Activated CD4-positive, alpha-beta T cell treated with anti-CD3 and anti-CD28 coated beads for 36 hours (primary cell): ENCODE measurements at regions of chr4 and their contacts with region 1.

Region 1: DNA sequence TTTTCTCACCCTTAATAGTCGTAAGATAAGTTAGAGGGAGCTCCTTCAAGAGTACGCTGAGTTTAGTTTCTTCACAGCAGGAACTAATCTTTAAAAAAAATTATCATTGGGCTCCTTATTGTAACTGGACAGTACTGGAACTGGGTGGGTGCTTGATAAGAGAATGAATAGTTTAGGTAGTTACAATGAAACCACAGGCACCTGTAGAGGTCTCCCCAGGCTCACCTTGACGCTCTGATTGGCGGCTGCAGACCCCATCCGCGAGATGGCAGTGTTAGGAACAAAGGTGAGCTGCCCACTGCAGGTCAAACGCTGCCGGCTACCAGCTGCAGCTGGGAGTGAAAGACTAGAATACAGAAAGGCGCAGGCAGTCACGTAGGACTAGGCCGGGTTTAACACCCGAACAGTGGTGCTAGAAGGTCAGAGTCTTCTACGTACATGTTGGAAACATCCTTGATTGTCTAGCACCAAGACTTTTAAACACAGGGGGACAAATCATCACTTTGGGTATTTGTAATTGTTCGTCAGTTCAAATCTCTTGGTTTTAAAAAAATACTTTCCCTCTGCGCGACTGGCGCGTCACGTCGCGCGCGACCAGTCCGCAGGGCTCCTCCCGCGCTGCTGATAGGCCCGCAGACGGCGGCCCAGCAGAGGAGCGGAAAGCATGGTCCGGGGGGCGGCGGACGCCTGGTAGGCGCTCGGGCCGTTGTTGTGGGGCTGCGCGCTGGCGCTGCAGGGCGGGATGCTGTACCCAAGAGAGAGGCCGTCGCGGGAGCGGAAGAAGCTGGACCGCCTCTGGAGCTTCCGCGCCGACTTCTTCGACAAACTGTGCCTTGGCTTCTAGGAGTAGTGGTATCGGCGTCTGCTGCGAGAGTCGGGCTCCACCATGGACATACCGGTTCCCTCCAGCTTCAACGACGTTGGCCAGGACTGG is 45.6 kb downstream of the SMARCA5 start:
- DNase-seq: peak; percentile 78
- ATAC-seq: peak; percentile 82
- H3K4me3 Mint-ChIP-seq: peak overlapping the region; percentile 85
- H3K27ac Mint-ChIP-seq: peak overlapping the region; percentile 93
- H3K4me1 Mint-ChIP-seq: peaks cover 29% of the 10 kb centered on the region
- H3K27me3 Mint-ChIP-seq: no peaks in the 10 kb centered on the region

Region 2: DNA sequence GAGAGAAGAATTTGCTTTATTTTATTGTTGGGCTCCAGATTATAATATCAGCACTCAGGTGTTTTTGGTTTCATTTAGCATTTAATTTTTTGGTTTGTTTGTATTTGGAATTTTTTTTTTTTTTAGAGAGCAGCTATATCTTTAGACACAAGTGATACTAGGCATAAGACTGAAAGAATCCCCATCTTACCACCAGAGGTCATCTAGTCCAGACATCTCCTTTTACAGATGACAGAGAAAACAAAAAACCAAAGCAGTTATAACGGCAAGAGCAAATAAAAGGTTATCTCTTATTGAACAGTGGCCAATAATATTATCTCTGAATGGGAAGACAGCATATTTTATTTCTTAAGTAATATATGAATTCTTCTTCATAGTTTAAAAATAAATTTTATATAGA is 351.5 kb before region 1 on chr4:
- CTCF ChIA-PET with region 1: no interaction called
- POLR2A ChIA-PET with region 1: no interaction called
- intact Hi-C with region 1: no loop called
- DNase-seq: no peak
- ATAC-seq: no peak
- H3K4me3 Mint-ChIP-seq: no peak overlapping the region
- H3K27ac Mint-ChIP-seq: no peak overlapping the region
- H3K4me1 Mint-ChIP-seq: no peaks in the 10 kb centered on the region
- H3K27me3 Mint-ChIP-seq: no peaks in the 10 kb centered on the region

Region 3: GRCh38 chr4:143524211-143524610 is 34.9 kb before region 1 on chr4:
- CTCF ChIA-PET with region 1: no interaction called
- POLR2A ChIA-PET with region 1: no interaction called
- intact Hi-C with region 1: no loop called
- DNase-seq: no peak
- ATAC-seq: no peak
- H3K4me3 Mint-ChIP-seq: no peak overlapping the region
- H3K27ac Mint-ChIP-seq: no peak overlapping the region
- H3K4me1 Mint-ChIP-seq: peaks cover 38% of the 10 kb centered on the region
- H3K27me3 Mint-ChIP-seq: no peaks in the 10 kb centered on the region

Region 4: DNA sequence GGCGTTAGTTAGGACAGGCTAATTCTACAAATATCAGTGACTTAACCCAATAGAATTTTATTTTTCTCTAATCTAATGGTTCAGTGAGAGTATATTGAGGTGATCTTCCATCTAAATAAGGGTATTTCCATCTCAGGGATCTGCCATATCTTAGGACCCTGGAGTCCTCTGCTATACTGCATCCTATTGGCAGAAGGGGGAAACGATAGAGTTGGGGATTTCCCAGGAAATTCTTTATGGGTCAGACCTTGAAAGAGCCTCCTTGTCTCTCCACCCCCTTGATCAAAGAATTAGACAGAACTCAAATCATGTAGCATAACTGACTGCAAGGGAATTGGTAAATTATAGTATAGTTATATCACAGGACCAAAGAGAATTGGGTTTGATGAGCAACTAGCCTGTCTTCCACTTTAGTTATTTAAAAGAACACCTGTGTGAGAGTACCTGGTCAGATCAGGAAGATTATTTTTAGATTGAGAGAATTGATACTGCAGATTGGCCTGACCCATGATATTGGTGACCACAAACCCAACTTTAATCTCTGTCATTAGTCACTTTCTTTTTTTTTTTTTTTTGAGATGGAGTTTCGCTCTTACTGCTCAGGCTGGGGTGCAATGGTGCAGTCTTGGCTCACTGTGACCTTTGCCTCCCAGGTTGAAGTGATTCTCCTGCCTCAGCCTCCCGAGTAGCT is 20.0 kb before region 1 on chr4:
- CTCF ChIA-PET with region 1: interaction called, 3 read pairs
- POLR2A ChIA-PET with region 1: no interaction called
- intact Hi-C with region 1: loop called in 1 of 2 experiments (anchors 1 kb)
- DNase-seq: no peak
- ATAC-seq: peak; percentile 78
- H3K4me3 Mint-ChIP-seq: no peak overlapping the region
- H3K27ac Mint-ChIP-seq: peak overlapping the region; percentile 48
- H3K4me1 Mint-ChIP-seq: peaks cover 17% of the 10 kb centered on the region
- H3K27me3 Mint-ChIP-seq: no peaks in the 10 kb centered on the region

Region 5: DNA sequence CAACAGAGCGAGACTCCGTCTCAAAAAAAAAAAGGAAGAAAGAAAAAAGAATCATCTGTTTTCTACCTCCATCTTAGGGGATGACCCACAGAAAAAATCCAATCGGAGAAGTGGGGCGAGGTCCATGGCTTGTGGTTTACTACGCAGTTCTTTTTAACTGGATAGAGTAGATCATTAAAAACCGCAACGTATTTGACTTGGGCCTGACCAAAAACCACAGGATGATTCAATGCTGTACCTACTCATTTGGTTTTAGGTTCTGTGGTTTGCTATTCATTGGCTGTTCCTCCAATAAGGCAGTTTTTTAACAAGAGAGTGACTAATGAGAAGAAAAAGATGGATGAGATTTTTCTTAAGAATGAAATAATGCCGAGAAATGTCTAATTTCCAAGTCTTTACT is 57.7 kb after region 1 on chr4:
- CTCF ChIA-PET with region 1: interaction called, 3 read pairs
- POLR2A ChIA-PET with region 1: no interaction called
- intact Hi-C with region 1: loop called in 1 of 2 experiments (anchors 2 kb)
- DNase-seq: peak; percentile 44
- ATAC-seq: peak; percentile 81
- H3K4me3 Mint-ChIP-seq: no peak overlapping the region
- H3K27ac Mint-ChIP-seq: no peak overlapping the region
- H3K4me1 Mint-ChIP-seq: peaks cover 5% of the 10 kb centered on the region
- H3K27me3 Mint-ChIP-seq: peaks cover 34% of the 10 kb centered on the region

Region 6: GRCh38 chr4:144141493-144141892 is 582.4 kb after region 1 on chr4:
- CTCF ChIA-PET with region 1: no interaction called
- POLR2A ChIA-PET with region 1: no interaction called
- intact Hi-C with region 1: loop called in 1 of 2 experiments (anchors 2 kb)
- DNase-seq: no peak
- ATAC-seq: no peak
- H3K4me3 Mint-ChIP-seq: no peak overlapping the region
- H3K27ac Mint-ChIP-seq: no peak overlapping the region
- H3K4me1 Mint-ChIP-seq: no peaks in the 10 kb centered on the region
- H3K27me3 Mint-ChIP-seq: no peaks in the 10 kb centered on the region

Region 7: DNA sequence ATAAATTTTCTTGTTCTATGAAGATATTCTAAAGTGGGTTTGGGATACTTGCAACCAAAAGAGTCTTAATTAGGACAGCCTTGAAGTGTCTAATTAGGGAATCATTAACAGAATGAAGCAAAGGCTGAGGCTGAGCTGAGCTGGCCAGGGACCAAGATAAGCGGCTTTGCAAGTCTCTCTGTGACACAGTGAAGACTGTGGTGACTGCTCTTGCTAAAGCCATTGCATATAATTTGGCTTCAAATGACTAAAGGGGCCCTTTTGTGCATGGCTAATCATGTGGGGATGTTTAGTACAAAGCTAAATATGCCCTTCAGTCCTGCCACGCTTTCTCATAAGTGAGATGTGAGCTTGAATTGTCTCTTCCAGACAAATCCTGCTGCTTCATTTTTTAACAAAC is 612.6 kb after region 1 on chr4:
- CTCF ChIA-PET with region 1: no interaction called
- POLR2A ChIA-PET with region 1: no interaction called
- intact Hi-C with region 1: no loop called
- DNase-seq: no peak
- ATAC-seq: no peak
- H3K4me3 Mint-ChIP-seq: no peak overlapping the region
- H3K27ac Mint-ChIP-seq: no peak overlapping the region
- H3K4me1 Mint-ChIP-seq: peaks cover 11% of the 10 kb centered on the region
- H3K27me3 Mint-ChIP-seq: peaks cover 5% of the 10 kb centered on the region